ENCODE measurements at regions of chr1 and their contacts with region 1.

Region 1: GRCh38 chr1:50978144-50978851 is 8.3 kb downstream of the CDKN2C start:
- DNase-seq: peak in 4 of 5 donors; percentile 22 to 52 (median 34)
- H3K4me3 ChIP-seq: peak overlapping the region; percentile 42 to 69
- H3K4me3 Mint-ChIP-seq: peak overlapping the region; percentile 86 to 92 (median 88)
- H3K27ac ChIP-seq: peak overlapping the region; percentile 67
- H3K27ac Mint-ChIP-seq: peak overlapping the region in 6 of 7 donors; percentile 43 to 90 (median 84)
- H3K4me1 ChIP-seq: peaks cover 23% of the 10 kb centered on the region
- H3K4me1 Mint-ChIP-seq: peaks cover 16 to 34% (median 21%) of the 10 kb centered on the region in 4 donors
- H3K27me3 ChIP-seq: no peaks in the 10 kb centered on the region
- H3K27me3 Mint-ChIP-seq: peaks cover 0 to 5% of the 10 kb centered on the region in 2 donors

Region 2: DNA sequence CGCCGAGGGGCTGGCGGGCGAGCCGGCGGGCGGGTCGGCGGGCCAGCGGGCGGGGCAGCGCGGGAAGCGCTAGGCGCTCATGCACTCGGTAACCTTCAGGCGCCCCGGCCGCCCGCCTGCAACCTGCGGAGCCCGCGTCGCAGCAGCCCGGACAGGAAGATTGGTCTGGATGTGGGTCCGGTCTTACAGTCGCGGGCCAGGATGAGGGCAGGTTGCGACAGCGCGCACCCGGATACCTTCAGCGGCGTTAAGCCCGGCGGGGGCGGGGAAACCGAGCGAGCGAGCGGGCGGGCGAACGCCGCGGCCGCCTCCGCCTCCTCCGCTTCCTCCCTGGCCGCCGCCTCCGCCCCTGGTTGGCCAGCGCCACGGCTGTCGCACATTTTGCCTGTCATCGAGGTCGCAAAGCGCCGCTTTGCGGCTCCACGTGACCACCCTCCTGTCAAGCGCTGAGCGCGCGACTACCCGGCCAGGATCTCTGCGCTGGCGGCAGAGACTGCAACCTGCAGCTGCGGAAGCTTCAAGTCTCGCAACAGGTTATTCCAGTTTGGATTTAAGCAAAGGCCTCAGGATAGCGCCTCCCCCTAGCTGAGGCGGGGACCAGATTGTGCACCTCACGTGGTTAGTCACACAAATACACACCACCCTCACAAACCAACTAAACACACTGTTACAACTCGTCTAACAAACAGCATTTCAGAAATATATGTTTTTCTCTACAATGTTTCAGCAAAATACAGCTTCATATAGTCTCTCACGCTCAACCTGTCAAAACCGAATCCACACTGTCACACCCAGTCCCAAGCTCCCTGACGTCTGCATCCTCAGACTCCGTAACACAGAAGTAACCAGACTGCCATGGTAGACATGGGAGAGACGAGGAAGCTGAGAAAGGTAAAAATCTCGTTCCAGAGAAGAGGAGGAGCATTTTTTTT is 18.1 kb before region 1 on chr1 and contains the start of gene FAF1:
- CTCF ChIA-PET with region 1: interaction called, 4 read pairs
- POLR2A ChIA-PET with region 1: interaction called, 44 read pairs
- intact Hi-C with region 1: loop called (anchors 1 kb)
- DNase-seq: peak; percentile 97 to 98 (median 98)
- H3K4me3 ChIP-seq: peak within 1 kb of the TSS; percentile 89 to 91
- H3K4me3 Mint-ChIP-seq: peak within 1 kb of the TSS; percentile 93 to 99 (median 96)
- H3K27ac ChIP-seq: peak within 1 kb of the TSS; percentile 63
- H3K27ac Mint-ChIP-seq: peak within 1 kb of the TSS; percentile 90 to 98 (median 97)
- H3K4me1 ChIP-seq: peaks cover 13% of the 10 kb centered on the region
- H3K4me1 Mint-ChIP-seq: peaks cover 16 to 26% (median 21%) of the 10 kb centered on the region in 4 donors
- H3K27me3 ChIP-seq: no peaks in the 10 kb centered on the region
- H3K27me3 Mint-ChIP-seq: no peaks in the 10 kb centered on the region
- total RNA-seq, gene FAF1: 50.0 to 57.7 TPM

Measured in CD4-positive, alpha-beta memory T cell (primary cell).